Dorsolateral prefrontal cortex (tissue), 120 donors: ENCODE measurements at regions of chr19 and their contacts with region 1.

Region 1: GRCh38 chr19:14073261-14073924 is 807 bp downstream of the MISP3 start:
- DNase-seq: peak; percentile 35 to 83 (median 72)
- H3K4me3 ChIP-seq: peak overlapping the region; percentile 48 to 94 (median 83)
- H3K27ac ChIP-seq: peak overlapping the region; percentile 78 to 98 (median 96)
- H3K27me3 ChIP-seq: no peaks in the 10 kb centered on the region
- CTCF ChIP-seq: peak in 32 of 56 donors; percentile 2 to 80 (median 44)

Region 2: DNA sequence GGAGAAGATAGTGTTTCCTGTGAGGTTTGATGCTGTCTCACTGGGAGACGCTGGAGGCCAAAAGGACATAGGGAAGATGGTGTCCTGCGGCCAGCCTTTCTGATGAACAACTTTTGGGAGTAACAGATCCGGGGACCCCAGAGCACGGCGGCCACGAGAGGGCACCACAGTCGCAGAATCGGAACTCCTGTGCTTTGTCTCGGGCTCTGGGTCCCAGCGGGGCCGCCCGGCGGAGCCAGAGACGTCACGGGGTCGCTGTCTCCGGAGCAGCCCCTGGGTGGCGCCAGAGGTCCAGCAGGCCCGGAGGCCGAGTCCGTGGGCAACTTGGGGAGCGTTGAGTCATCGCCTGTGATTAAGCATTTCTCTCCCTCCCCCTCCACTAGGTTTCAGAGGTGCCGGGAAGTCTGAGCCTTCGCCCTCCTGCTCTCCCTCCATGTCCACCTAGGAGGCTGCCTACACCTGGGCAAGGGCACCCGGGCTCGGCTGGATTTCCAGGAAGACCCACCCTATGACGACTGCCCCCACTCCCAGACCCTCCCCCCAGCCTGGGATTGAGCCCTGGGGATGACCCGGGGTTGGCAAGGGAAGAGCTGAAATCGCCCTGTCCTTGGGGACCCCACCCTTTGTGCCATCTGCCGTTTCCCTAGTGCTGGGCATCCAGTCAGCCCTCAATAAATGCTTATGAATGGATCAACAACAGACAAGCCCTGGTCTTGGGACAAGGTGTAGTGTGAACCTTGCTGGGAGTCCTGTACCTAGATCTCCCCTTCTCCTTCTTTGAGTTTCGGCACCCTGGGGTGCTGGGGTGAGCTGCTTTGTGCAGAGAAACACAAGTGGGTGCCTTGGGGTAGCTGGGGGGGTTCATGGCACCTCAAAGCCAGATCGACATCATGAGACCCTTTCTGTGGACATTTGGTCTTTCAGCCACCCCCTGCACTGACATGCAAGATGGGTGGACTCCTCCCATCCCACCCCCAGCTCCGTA is 193.0 kb before region 1 on chr19:
- intact Hi-C with region 1: loop called (anchors 1 to 2 kb)
- DNase-seq: peak; percentile 95 to 98 (median 97)
- H3K4me3 ChIP-seq: peak overlapping the region in 57 of 59 donors; percentile 14 to 66 (median 43)
- H3K27ac ChIP-seq: peak overlapping the region in 51 of 59 donors; percentile 10 to 92 (median 77)
- H3K27me3 ChIP-seq: no peaks in the 10 kb centered on the region
- CTCF ChIP-seq: peak; percentile 92 to 100 (median 100)

Region 3: DNA sequence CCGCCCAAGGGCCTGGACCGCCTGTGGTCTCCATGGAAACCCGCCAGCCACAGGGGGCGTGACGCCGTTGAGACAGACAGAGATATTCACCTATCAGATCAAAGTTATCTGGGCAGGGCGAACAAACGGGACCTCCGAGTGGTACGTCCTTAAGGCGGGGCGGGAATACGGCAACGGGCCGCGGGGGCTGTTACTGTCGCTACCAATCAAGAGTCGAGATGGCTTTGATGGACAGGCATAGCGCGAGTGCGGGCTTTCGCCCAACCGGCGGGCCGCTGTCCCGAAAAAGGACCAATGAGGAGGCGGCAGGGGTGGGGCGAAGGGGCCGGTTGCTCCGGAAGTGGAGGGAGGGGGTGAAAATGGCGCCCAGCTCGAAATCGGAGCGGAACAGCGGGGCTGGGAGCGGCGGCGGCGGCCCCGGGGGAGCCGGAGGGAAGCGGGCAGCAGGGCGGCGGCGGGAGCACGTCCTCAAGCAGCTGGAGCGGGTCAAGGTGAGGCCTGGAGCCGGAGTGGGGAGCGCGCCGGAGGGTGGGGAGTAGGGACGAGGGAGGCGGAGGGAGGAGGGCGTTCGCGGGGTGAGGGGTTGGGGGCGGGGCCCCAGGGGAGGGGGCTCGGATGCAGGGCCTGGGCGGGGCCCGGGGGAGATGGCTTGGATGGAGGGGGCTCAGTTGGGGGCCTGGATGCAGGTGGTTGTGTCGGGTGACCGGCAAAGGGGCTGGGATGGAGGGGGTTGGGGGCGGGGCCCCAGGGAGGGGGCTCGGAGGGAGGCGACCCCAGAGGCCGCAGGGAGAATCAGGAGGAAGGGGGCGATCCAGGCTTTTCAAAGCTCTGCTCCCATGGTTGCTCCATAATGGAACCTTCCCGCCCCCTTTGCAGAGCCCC is 121.0 kb before region 1 on chr19 and contains the start of gene DCAF15:
- intact Hi-C with region 1: loop called in 1 of 2 experiments (anchors 5 kb)
- DNase-seq: peak; percentile 98 to 100 (median 100)
- H3K4me3 ChIP-seq: peak within 1 kb of the TSS; percentile 49 to 86 (median 78)
- H3K27ac ChIP-seq: peak within 1 kb of the TSS in 51 of 59 donors; percentile 4 to 94 (median 75)
- H3K27me3 ChIP-seq: no peaks in the 10 kb centered on the region
- CTCF ChIP-seq: peak in 16 of 56 donors; percentile 8 to 41 (median 30)
- total RNA-seq, gene DCAF15: 12.2 to 26.7 (median 17.6) TPM

Region 4: DNA sequence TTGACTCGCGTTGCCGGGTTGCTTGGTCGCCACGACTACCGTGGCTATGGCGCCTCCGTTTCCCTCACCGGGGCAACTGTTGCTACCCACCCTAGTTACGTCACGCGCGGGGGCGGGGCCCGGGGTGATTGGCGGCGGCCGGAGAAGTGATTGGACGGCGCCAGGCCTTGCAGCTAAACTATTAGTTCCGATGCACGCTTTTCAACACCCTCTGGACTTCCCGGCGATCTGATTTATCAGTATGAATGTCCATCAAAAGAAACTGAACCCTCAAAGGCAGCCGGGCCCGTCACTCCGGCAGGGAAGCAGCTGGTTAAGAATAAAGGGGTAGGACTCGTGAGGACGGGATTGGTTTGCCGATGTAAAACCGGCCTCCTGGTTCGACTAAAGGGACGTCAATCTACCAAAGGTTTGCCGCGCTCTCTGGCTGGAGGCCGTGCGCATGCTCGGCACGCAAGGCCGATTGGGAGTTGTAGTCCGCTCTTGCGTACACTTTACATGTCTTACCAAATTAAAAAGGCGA is 67.1 kb before region 1 on chr19 and contains the start of gene RFX1:
- intact Hi-C with region 1: loop called (anchors 5 kb)
- DNase-seq: peak; percentile 98 to 100 (median 100)
- H3K4me3 ChIP-seq: peak within 1 kb of the TSS; percentile 62 to 97 (median 89)
- H3K27ac ChIP-seq: peak within 1 kb of the TSS; percentile 94 to 100 (median 99)
- H3K27me3 ChIP-seq: no peaks in the 10 kb centered on the region
- CTCF ChIP-seq: peak in 2 of 56 donors; percentile 6 to 10
- total RNA-seq, gene RFX1: 7.9 to 26.0 (median 14.0) TPM

Region 5: GRCh38 chr19:14090509-14091080 is 17.2 kb after region 1 on chr19 and contains the start of gene SAMD1:
- intact Hi-C with region 1: loop called in 1 of 2 experiments (anchors 1 kb)
- DNase-seq: peak; percentile 50 to 88 (median 80)
- H3K4me3 ChIP-seq: peak within 1 kb of the TSS; percentile 50 to 88 (median 77)
- H3K27ac ChIP-seq: peak within 1 kb of the TSS; percentile 72 to 98 (median 93)
- H3K27me3 ChIP-seq: no peaks in the 10 kb centered on the region
- CTCF ChIP-seq: peak in 2 of 56 donors; percentile 2 to 4
- total RNA-seq, gene SAMD1: 30.2 to 108 (median 43.1) TPM

Region 6: GRCh38 chr19:14113762-14114414 is 40.5 kb after region 1 on chr19:
- intact Hi-C with region 1: no loop called
- DNase-seq: no peak
- H3K4me3 ChIP-seq: peak overlapping the region in 9 of 59 donors; percentile 3 to 41 (median 20)
- H3K27ac ChIP-seq: peak overlapping the region in 45 of 59 donors; percentile 4 to 86 (median 65)
- H3K27me3 ChIP-seq: no peaks in the 10 kb centered on the region
- CTCF ChIP-seq: peak in 2 of 56 donors; percentile 6 to 15

Region 7: GRCh38 chr19:14318873-14319272 is 245.5 kb after region 1 on chr19:
- intact Hi-C with region 1: no loop called
- DNase-seq: no peak
- H3K4me3 ChIP-seq: no peak overlapping the region
- H3K27ac ChIP-seq: no peak overlapping the region
- H3K27me3 ChIP-seq: no peaks in the 10 kb centered on the region
- CTCF ChIP-seq: peak in 16 of 56 donors; percentile 8 to 27 (median 15)